IMR-90 (cell line): ENCODE measurements at regions of chr20 and their contacts with region 1.

Region 1: GRCh38 chr20:24149881-24150307 is 161.3 kb upstream of the GGTLC1 start:
- DNase-seq: no peak
- ATAC-seq: peak; percentile 64
- H3K4me3 ChIP-seq: no peak overlapping the region
- H3K27ac ChIP-seq: no peak overlapping the region
- H3K4me1 ChIP-seq: no peaks in the 10 kb centered on the region
- H3K27me3 ChIP-seq: no peaks in the 10 kb centered on the region
- CTCF ChIP-seq: peak; percentile 31; the same call in 1 of the 2 replicates
- POLR2A ChIP-seq: no peak
- RAD21 ChIP-seq: no peak

Region 2: DNA sequence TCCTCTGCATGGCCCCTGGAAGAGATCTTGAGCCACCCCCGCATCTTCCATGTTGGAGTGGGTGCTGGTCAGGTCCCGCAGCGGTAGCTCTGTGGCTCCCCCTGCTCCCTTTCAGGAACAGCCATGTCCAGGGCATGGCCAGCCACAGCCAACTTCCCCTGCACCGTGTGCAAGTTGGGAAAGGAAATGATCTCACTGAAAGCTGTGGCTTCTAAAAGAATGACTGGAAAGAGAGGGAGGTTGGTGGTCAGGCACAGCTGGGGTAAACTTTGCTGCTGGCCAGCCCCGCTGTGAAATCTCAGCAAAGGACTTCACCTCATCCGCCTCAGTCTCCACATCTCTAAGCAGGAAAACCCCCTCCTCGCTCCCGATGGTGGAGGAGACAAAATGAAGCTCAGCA is 645.5 kb after region 1 on chr20:
- CTCF ChIA-PET with region 1: no interaction called
- POLR2A ChIA-PET with region 1: no interaction called
- dilution Hi-C with region 1: no loop called
- in situ Hi-C with region 1: loop called (anchors 10 kb)
- intact Hi-C with region 1: no loop called
- DNase-seq: peak; percentile 1
- ATAC-seq: no peak
- H3K4me3 ChIP-seq: no peak overlapping the region
- H3K27ac ChIP-seq: no peak overlapping the region
- H3K4me1 ChIP-seq: no peaks in the 10 kb centered on the region
- H3K27me3 ChIP-seq: peaks cover 9% of the 10 kb centered on the region
- CTCF ChIP-seq: no peak
- POLR2A ChIP-seq: no peak
- RAD21 ChIP-seq: no peak